ENCODE measurements at regions of chr20 and their contacts with region 1.

Region 1: DNA sequence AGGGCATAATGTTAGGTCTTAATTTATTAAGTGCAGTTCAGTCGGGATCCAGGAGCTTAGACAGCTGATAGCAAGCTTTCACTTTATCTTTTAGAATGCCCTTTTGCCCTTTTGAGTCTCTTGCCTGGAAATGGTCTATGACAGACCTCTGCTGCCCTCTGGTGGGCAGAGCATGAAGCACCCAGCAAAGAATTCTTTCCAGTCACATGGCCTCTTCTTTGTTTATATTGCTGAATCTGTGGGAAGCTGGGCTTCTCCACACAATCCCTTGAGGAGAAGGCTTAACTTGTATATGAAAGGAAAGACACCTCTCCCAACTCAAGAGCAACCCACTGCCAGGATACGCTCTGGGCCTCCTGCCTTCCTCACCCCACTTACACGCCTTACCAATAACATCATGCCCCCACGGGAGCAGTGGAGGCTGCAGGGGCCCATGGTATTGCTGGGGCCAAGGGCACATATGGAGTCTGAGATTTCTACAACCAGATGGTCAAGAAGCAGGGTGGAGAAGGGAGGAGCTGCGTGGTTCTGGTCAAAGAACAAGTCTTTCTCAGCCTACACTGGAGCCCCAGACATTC is 20.4 kb downstream of the WFDC3 start:
- DNase-seq: peak in 1 of 2 donors; percentile 91
- H3K4me3 ChIP-seq: no peak overlapping the region
- H3K27ac ChIP-seq: peak overlapping the region; percentile 45 to 46
- H3K4me1 ChIP-seq: peaks cover 0 to 10% of the 10 kb centered on the region in 2 donors
- H3K27me3 ChIP-seq: no peaks in the 10 kb centered on the region
- CTCF ChIP-seq: peak; percentile 85 to 93 (median 91)

Region 2: GRCh38 chr20:44966030-44966961 is 805.0 kb before region 1 on chr20 and contains the start of gene STK4:
- intact Hi-C with region 1: loop called (anchors 10 kb)
- DNase-seq: peak; percentile 76 to 97
- H3K4me3 ChIP-seq: peak within 1 kb of the TSS; percentile 79 to 96
- H3K27ac ChIP-seq: peak within 1 kb of the TSS; percentile 78 to 83
- H3K4me1 ChIP-seq: peaks cover 10 to 11% of the 10 kb centered on the region in 2 donors
- H3K27me3 ChIP-seq: no peaks in the 10 kb centered on the region
- CTCF ChIP-seq: peak; percentile 21 to 60 (median 53)
- total RNA-seq, gene STK4: 20.6 TPM

Region 3: GRCh38 chr20:45318948-45319347 is 452.3 kb before region 1 on chr20:
- intact Hi-C with region 1: loop called (anchors 1 kb)
- DNase-seq: no peak
- H3K4me3 ChIP-seq: no peak overlapping the region
- H3K27ac ChIP-seq: no peak overlapping the region
- H3K4me1 ChIP-seq: no peaks in the 10 kb centered on the region
- H3K27me3 ChIP-seq: no peaks in the 10 kb centered on the region
- CTCF ChIP-seq: no peak

Region 4: DNA sequence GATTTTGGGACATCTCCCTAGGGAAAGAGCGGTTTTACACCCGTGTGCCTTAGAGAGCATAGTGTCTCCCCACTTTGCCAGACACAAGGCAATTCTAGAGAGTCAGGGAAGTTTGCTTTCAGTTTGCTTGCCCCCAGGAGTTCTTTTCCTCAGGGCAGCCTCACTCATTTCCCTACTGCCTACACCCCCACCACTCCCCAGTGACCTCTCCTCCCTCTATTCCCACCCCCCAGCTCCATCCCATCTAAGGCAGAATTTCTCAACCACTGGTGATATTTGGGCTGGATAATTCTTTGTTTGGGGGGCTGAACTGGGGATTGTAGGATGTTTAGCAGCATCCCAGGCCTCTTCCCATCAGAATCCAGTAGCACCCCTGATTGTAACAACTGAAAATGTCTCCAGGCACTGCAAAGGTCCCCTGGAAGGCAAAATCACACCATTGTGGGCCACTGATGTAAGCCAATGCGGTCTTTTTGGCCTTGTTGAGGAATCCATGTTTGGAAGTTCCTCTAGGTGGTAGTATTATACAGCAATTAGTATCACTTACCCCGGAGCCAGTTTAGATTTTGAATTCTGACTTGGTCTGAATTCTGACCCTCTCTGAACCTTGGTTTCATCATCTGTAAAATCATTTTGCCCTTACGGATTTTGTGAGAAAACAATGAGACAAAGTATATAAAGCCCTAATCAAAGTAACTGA is 225.4 kb before region 1 on chr20:
- intact Hi-C with region 1: loop called (anchors 2 kb)
- DNase-seq: no peak
- H3K4me3 ChIP-seq: no peak overlapping the region
- H3K27ac ChIP-seq: no peak overlapping the region
- H3K4me1 ChIP-seq: no peaks in the 10 kb centered on the region
- H3K27me3 ChIP-seq: no peaks in the 10 kb centered on the region
- CTCF ChIP-seq: peak in 1 of 3 experiments; percentile 30

Measured in ascending aorta (tissue), 2 donors.